ENCODE measurements at regions of chr17 and their contacts with region 1.

Region 1: DNA sequence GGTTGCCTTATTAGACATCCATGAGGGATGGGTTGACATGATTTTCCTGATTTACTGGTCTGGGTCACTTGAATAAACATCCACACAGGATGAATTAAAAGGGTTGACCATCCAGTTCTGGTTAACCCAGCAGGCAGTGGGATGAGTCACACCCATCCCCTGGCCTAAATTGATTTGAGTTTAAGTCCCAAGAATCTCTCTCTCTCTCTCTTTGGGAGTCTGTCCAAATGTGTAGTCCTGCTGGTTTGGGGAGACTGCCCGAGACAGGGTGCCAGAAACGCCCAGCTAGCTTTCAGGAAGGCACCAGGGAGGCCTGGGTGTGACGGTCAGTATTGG is 38.8 kb downstream of the SCPEP1 start:
- DNase-seq: peak; percentile 63 to 99
- H3K4me3 ChIP-seq: no peak overlapping the region
- H3K27ac ChIP-seq: peak overlapping the region; percentile 25
- H3K4me1 ChIP-seq: peaks cover 43% of the 10 kb centered on the region
- H3K27me3 ChIP-seq: no peaks in the 10 kb centered on the region
- CTCF ChIP-seq: no peak

Region 2: DNA sequence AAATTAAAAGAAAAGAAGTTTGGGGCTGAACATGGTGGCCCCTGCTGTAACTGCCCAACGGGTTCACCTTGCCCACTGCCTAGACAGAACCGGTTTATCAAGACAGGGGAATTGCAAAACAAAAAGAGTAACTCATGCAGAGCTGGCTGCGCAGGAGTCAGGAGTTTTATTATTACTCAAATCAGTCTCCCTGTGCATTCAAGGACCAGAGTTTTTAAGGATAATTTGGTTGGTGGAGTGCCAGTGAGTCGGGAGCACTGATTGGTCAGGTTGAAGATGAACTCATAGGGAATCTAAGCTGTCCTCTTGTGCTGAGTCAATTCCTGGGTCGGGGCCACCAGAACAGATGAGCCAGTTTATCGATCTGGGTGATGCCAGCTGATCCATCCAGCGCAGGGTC is 43.2 kb before region 1 on chr17:
- CTCF ChIA-PET with region 1: no interaction called
- POLR2A ChIA-PET with region 1: interaction called, 6 read pairs
- intact Hi-C with region 1: loop called (anchors 2 kb)
- DNase-seq: peak; percentile 24 to 78
- H3K4me3 ChIP-seq: no peak overlapping the region
- H3K27ac ChIP-seq: no peak overlapping the region
- H3K4me1 ChIP-seq: peaks cover 27% of the 10 kb centered on the region
- H3K27me3 ChIP-seq: no peaks in the 10 kb centered on the region
- CTCF ChIP-seq: no peak

Region 3: GRCh38 chr17:57051886-57052361 is 35.2 kb after region 1 on chr17:
- CTCF ChIA-PET with region 1: no interaction called
- POLR2A ChIA-PET with region 1: interaction called, 4 read pairs
- intact Hi-C with region 1: loop called (anchors 2 kb)
- DNase-seq: no peak
- H3K4me3 ChIP-seq: no peak overlapping the region
- H3K27ac ChIP-seq: no peak overlapping the region
- H3K4me1 ChIP-seq: peaks cover 8% of the 10 kb centered on the region; the same call in 1 of the 2 replicates
- H3K27me3 ChIP-seq: no peaks in the 10 kb centered on the region
- CTCF ChIP-seq: no peak

Region 4: GRCh38 chr17:57084802-57085447 is 68.2 kb after region 1 on chr17 and contains the start of gene AKAP1:
- CTCF ChIA-PET with region 1: no interaction called
- POLR2A ChIA-PET with region 1: no interaction called
- intact Hi-C with region 1: loop called (anchors 1 kb)
- DNase-seq: peak; percentile 86 to 97
- H3K4me3 ChIP-seq: peak within 1 kb of the TSS; percentile 91
- H3K27ac ChIP-seq: peak within 1 kb of the TSS; percentile 64
- H3K4me1 ChIP-seq: peaks cover 28% of the 10 kb centered on the region
- H3K27me3 ChIP-seq: no peaks in the 10 kb centered on the region
- CTCF ChIP-seq: peak; percentile 40; the same call in 1 of the 2 replicates
- total RNA-seq, gene AKAP1: 29.8 and 34.9 TPM in 2 replicates

Region 5: DNA sequence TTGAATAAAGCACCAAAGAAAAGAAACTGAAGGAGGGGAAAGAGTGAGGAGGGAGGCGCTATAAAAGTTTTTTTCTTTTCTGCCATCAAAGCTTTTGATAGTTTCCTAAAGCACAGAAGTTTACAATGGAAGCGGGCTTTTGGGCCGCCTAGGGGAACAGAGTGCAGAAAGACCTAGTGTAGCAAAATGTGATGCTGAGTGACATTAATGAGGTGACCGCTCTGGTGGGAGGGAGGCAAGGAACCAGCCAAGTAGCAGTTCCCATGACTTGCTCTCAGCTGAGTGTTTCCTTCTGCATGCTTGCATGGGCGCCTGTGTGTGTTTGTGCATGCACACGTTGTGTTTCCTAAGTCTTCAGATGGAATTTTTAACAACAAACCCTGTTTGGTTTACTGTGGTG is 255.1 kb after region 1 on chr17:
- CTCF ChIA-PET with region 1: no interaction called
- POLR2A ChIA-PET with region 1: no interaction called
- intact Hi-C with region 1: no loop called
- DNase-seq: no peak
- H3K4me3 ChIP-seq: no peak overlapping the region
- H3K27ac ChIP-seq: no peak overlapping the region
- H3K4me1 ChIP-seq: no peaks in the 10 kb centered on the region
- H3K27me3 ChIP-seq: peaks cover 27% of the 10 kb centered on the region
- CTCF ChIP-seq: no peak